Calu3 (cell line): ENCODE measurements at regions of chr7 and their contacts with region 1.

Region 1: GRCh38 chr7:130182990-130183389 is 22.2 kb downstream of the TMEM209 start:
- DNase-seq: no peak
- H3K4me3 Mint-ChIP-seq: no peak overlapping the region
- H3K27ac Mint-ChIP-seq: no peak overlapping the region
- H3K4me1 Mint-ChIP-seq: no peaks in the 10 kb centered on the region
- H3K27me3 Mint-ChIP-seq: no peaks in the 10 kb centered on the region
- CTCF ChIP-seq: no peak

Region 2: GRCh38 chr7:129940329-129940728 is 242.7 kb before region 1 on chr7:
- CTCF ChIA-PET with region 1: no interaction called
- intact Hi-C with region 1: no loop called
- DNase-seq: no peak
- H3K4me3 Mint-ChIP-seq: no peak overlapping the region
- H3K27ac Mint-ChIP-seq: no peak overlapping the region
- H3K4me1 Mint-ChIP-seq: no peaks in the 10 kb centered on the region
- H3K27me3 Mint-ChIP-seq: no peaks in the 10 kb centered on the region
- CTCF ChIP-seq: no peak

Region 3: GRCh38 chr7:130400120-130400591 is 217.2 kb after region 1 on chr7:
- CTCF ChIA-PET with region 1: interaction called, 10 read pairs
- intact Hi-C with region 1: no loop called
- DNase-seq: no peak
- H3K4me3 Mint-ChIP-seq: no peak overlapping the region
- H3K27ac Mint-ChIP-seq: no peak overlapping the region
- H3K4me1 Mint-ChIP-seq: no peaks in the 10 kb centered on the region
- H3K27me3 Mint-ChIP-seq: no peaks in the 10 kb centered on the region
- CTCF ChIP-seq: no peak